PC-9 (cell line): ENCODE measurements at regions of chr6 and their contacts with region 1.

Region 1: GRCh38 chr6:17020889-17021538 is 80.8 kb upstream of the STMND1 start:
- DNase-seq: no peak
- H3K4me3 ChIP-seq: no peak overlapping the region
- H3K27ac ChIP-seq: no peak overlapping the region
- H3K4me1 ChIP-seq: no peaks in the 10 kb centered on the region
- H3K27me3 ChIP-seq: no peaks in the 10 kb centered on the region
- CTCF ChIP-seq: no peak

Region 2: GRCh38 chr6:16257999-16258708 is 762.9 kb before region 1 on chr6:
- CTCF ChIA-PET with region 1: no interaction called
- POLR2A ChIA-PET with region 1: no interaction called
- intact Hi-C with region 1: no loop called
- DNase-seq: no peak
- H3K4me3 ChIP-seq: no peak overlapping the region
- H3K27ac ChIP-seq: no peak overlapping the region
- H3K4me1 ChIP-seq: no peaks in the 10 kb centered on the region
- H3K27me3 ChIP-seq: peaks cover 17% of the 10 kb centered on the region
- CTCF ChIP-seq: no peak

Region 3: GRCh38 chr6:16432075-16433032 is 588.7 kb before region 1 on chr6:
- CTCF ChIA-PET with region 1: no interaction called
- POLR2A ChIA-PET with region 1: interaction called, 11 read pairs
- intact Hi-C with region 1: no loop called
- DNase-seq: no peak
- H3K4me3 ChIP-seq: no peak overlapping the region
- H3K27ac ChIP-seq: no peak overlapping the region
- H3K4me1 ChIP-seq: no peaks in the 10 kb centered on the region
- H3K27me3 ChIP-seq: no peaks in the 10 kb centered on the region
- CTCF ChIP-seq: no peak